AG04450 (cell line): ENCODE measurements at regions of chr1 and their contacts with region 1.

Region 1: GRCh38 chr1:177873238-177873637 is 96.6 kb downstream of the SEC16B start:
- DNase-seq: peak; percentile 77
- H3K4me3 ChIP-seq: no peak overlapping the region
- H3K27ac ChIP-seq: peak overlapping the region; percentile 69
- H3K27me3 ChIP-seq: no peaks in the 10 kb centered on the region
- CTCF ChIP-seq: no peak

Region 2: DNA sequence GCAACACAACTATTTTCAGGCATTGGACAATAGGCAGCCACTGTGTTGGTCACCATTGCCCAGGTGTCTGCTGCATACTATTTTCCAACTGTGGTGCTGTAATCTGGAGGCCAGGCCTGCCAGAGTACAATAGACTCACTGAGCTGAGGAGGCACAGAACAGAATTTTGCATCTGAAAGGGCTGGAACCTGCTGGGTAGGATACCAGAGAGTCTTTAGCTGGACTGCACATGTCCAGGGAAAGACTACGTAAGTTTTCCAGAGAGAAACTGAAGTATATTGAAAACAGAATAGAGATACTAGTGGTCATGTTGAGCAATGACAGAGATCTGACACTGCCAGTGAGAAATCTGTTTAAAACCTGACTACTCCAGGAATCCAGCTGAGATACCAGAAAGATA is 421.4 kb after region 1 on chr1:
- CTCF ChIA-PET with region 1: interaction called, 11 read pairs
- POLR2A ChIA-PET with region 1: no interaction called
- DNase-seq: no peak
- H3K4me3 ChIP-seq: no peak overlapping the region
- H3K27ac ChIP-seq: no peak overlapping the region
- H3K27me3 ChIP-seq: no peaks in the 10 kb centered on the region
- CTCF ChIP-seq: no peak